Naive thymus-derived CD8-positive, alpha-beta T cell (primary cell): ENCODE measurements at regions of chr9 and their contacts with region 1.

Region 1: DNA sequence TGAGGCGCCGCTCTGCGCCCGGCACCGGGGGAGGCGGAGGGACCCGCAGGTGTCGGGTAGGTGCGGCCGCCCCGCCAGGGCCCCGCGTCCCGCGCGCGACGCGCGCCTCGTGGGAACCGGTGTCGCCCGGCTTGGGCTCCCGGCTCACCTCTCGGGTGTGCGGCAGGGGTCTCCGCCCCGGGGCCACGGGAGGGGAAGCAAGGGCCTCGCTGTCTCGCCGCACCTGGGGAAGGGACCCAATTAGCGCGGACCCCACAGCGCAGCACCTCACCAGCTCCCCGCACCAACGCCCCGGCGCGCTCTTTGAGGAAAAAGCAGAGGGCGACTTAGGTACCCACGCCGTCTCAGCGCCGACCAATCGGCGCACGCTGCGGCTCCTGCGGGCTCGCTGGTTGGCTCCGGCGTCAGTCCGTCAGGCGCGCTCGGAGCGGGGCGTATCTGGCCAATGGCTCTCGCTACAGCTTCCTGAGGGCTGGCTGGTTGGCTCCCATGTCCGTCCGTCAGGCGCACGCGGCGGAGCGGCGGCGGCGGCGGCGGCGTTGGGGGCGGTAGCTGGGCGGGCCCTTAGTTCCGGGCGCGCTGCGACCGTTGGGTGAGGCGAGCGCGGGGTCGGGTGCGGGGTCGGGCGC is at the start of gene TRAF2:
- DNase-seq: peak; percentile 92 to 98 (median 96)
- ATAC-seq: peak; percentile 94 to 96
- H3K4me3 Mint-ChIP-seq: peak within 1 kb of the TSS; percentile 75 to 92 (median 86)
- H3K27ac Mint-ChIP-seq: peak within 1 kb of the TSS; percentile 66 to 92 (median 86)
- H3K4me1 Mint-ChIP-seq: peaks cover 6 to 53% (median 36%) of the 10 kb centered on the region in 4 donors
- H3K27me3 Mint-ChIP-seq: no peaks in the 10 kb centered on the region
- polyA plus RNA-seq, gene TRAF2: 7.9 to 24.4 (median 12.2) TPM

Region 2: DNA sequence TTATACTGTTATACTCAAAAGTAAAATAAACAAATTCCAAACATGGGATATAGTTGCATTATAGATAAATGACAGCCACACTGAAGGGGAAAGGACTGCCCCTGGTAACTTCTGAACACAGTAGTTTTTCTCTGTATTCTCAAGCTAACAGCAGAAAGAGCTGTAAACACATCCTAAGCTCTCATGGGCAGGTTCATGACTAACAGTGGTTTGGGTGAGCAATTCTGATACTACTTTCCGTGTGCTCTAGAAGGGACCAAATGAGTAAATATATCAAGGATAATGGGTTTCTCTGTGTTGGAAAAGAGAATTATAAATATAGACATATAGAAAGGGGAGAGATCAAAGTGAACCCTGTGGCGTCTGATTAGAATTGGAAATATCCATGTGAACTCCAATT is 135.5 kb before region 1 on chr9:
- POLR2A ChIA-PET with region 1: no interaction called
- DNase-seq: no peak
- ATAC-seq: no peak
- H3K4me3 Mint-ChIP-seq: no peak overlapping the region
- H3K27ac Mint-ChIP-seq: no peak overlapping the region
- H3K4me1 Mint-ChIP-seq: peaks cover 0 to 14% (median 0%) of the 10 kb centered on the region in 4 donors
- H3K27me3 Mint-ChIP-seq: peaks cover 0 to 12% (median 2%) of the 10 kb centered on the region in 5 donors

Region 3: DNA sequence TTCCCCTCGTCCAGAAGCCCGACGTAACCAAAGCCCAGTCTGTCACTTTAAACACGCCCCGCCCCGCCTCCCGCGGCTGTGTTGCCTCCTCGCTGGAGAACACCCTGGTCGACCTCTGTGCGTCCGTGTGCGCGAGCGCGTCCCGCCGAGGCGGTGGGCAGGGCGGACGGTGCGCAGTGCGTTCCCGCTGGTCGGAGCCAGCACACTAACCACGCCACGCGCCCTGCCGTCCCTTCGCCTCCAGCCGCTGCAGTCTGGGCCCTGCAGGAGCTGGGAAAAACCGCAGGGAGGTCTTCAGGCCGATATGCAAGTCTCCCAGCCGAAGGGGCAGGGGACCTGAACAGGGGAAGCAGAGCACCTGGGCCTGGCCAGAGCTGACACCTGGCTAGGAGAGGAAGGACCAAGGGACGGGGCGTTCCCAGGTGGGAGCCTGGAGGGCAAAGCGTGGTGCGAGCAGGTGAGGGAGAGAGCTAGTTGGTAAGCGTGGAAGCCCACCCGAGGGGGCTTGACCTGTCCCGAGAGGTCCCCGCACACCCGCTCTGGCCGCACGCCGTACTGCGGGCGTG is 38.2 kb before region 1 on chr9:
- POLR2A ChIA-PET with region 1: interaction called, 12 read pairs
- DNase-seq: peak; percentile 27 to 78 (median 50)
- ATAC-seq: no peak
- H3K4me3 Mint-ChIP-seq: peak overlapping the region; percentile 63 to 91 (median 86)
- H3K27ac Mint-ChIP-seq: peak overlapping the region in 4 of 10 donors; percentile 72 to 90 (median 76)
- H3K4me1 Mint-ChIP-seq: peaks cover 5 to 23% (median 17%) of the 10 kb centered on the region in 4 donors
- H3K27me3 Mint-ChIP-seq: peaks cover 0 to 27% (median 2%) of the 10 kb centered on the region in 5 donors

Region 4: DNA sequence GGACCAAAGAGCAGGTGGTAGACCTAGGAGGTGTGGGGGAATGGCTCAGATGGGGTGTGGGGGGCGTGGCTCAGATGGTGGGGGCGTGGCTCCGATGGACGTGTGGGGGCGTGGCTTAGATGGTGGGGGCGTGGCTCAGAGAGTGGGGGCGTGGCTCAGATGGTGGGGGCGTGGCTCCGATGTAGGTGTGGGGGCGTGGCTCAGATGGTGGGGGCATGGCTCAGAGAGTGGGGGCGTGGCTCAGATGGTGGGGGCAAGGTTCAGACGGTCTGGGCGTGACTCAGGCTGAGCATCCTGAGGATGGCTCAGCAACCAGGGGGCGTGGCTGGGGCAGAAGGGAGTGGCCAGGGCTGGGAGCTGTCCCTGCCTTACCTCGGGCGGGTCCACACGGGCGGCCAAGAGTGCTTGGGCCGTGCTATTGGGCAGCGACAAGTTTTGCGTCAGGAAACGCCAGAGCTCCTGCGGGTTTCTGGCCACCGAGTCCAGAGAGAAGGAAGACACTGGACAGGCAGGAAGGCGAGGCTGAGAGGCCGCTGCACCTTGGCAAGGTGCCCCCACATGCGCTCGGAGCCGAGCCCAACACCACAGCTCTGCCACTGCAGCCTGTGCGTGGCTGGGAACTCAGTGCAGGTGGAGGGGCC is 136.0 kb after region 1 on chr9:
- POLR2A ChIA-PET with region 1: no interaction called
- DNase-seq: peak in 7 of 10 donors; percentile 32 to 56 (median 46)
- ATAC-seq: peak; percentile 39 to 53
- H3K4me3 Mint-ChIP-seq: peak overlapping the region in 1 of 10 donors; percentile 38
- H3K27ac Mint-ChIP-seq: peak overlapping the region in 4 of 10 donors; percentile 32 to 80 (median 47)
- H3K4me1 Mint-ChIP-seq: peaks cover 5 to 25% (median 16%) of the 10 kb centered on the region in 4 donors
- H3K27me3 Mint-ChIP-seq: no peaks in the 10 kb centered on the region